ENCODE measurements at regions of chr4 and their contacts with region 1.

Region 1: GRCh38 chr4:85228264-85228663 is 246.7 kb upstream of the ARHGAP24 start:
- DNase-seq: peak; percentile 13
- H3K4me3 ChIP-seq: no peak overlapping the region
- H3K27ac ChIP-seq: no peak overlapping the region
- H3K4me1 ChIP-seq: no peaks in the 10 kb centered on the region
- CTCF ChIP-seq: peak; percentile 71

Region 2: DNA sequence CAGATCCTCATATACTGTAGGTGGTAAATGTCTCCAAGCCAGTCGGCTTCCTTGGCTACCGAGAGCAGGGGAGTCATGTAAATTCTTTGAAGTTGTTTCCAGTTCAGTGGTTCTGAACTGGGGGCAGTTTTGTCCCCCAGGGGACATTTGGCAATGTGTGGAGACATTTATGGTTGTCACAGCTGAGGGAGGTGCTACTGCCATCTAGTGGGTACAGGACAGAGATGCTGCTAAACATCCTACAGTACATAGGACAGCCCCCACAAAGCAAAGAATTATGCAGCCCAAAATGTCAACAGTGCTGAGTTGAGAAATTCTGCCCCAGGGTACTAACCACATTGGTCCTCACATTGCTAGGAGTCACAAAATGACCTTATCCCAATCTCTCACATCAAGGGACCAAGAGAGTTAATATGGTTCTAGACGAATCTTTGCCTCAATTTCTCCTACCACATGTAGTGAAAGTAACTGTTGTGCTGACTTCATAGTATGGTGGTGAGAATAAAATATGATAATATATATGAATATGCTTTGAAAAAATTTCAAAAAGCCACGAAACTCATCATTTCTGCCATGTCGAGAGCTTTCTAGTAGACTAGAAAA is 142.3 kb after region 1 on chr4:
- CTCF ChIA-PET with region 1: no interaction called
- POLR2A ChIA-PET with region 1: no interaction called
- intact Hi-C with region 1: loop called (anchors 1 kb)
- DNase-seq: peak; percentile 64
- H3K4me3 ChIP-seq: no peak overlapping the region
- H3K27ac ChIP-seq: no peak overlapping the region
- H3K4me1 ChIP-seq: peaks cover 4% of the 10 kb centered on the region
- CTCF ChIP-seq: peak; percentile 92

Region 3: GRCh38 chr4:85787138-85787537 is 558.9 kb after region 1 on chr4:
- CTCF ChIA-PET with region 1: no interaction called
- POLR2A ChIA-PET with region 1: no interaction called
- intact Hi-C with region 1: loop called (anchors 10 kb)
- DNase-seq: no peak
- H3K4me3 ChIP-seq: no peak overlapping the region
- H3K27ac ChIP-seq: no peak overlapping the region
- H3K4me1 ChIP-seq: peaks cover 25% of the 10 kb centered on the region
- CTCF ChIP-seq: no peak

Measured in OCI-LY7 (cell line).